CD4-positive, alpha-beta T cell (primary cell): ENCODE measurements at regions of chr18 and their contacts with region 1.

Region 1: GRCh38 chr18:11980555-11981382 is 538 bp upstream of the IMPA2 start:
- DNase-seq: peak; percentile 89 to 98 (median 94)
- ATAC-seq: peak; percentile 94
- H3K4me3 ChIP-seq: peak overlapping the region; percentile 64
- H3K4me3 Mint-ChIP-seq: peak overlapping the region; percentile 93
- H3K27ac ChIP-seq: no peak overlapping the region
- H3K27ac Mint-ChIP-seq: peak overlapping the region; percentile 49
- H3K4me1 ChIP-seq: peaks cover 19% of the 10 kb centered on the region
- H3K4me1 Mint-ChIP-seq: peaks cover 12% of the 10 kb centered on the region
- H3K27me3 ChIP-seq: no peaks in the 10 kb centered on the region
- H3K27me3 Mint-ChIP-seq: no peaks in the 10 kb centered on the region
- CTCF ChIP-seq: no peak

Region 2: DNA sequence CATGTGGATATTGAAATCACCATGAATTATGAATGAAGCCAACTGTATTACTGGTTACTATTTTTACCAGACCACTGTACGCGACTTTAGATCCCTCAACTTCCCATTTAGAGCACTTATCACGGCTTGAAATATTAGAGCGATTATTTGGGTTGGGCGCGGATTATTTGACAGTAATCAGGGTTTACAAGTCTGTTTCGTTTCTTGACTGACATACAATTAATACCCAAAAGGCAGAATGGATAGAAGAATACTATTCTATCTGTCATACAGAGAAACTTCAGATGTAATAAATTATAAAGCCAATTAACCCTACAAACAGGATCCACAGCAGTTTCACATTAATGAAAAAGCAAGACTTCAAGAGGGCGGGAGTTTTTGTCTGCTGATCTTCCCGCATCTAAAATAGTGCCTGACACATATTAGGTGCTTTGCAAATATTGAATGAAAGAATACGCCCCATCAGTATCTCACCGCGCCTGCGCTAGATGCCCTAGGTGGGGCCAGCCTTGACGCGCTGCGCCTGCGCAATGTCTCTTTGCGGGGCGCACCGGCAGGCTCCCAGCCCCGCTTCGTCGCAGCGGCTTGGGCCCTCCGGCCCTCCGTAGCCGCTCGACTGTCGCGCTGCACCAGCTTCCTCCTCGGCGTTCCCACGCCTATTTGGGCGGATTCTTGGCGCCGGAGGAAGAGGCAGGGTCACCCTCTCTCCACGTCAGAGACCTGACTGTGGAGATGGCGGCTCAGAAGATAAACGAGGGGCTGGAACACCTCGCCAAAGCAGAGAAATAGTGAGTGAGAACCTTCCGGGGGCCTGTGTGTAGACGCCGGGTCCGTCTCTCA is 1455.2 kb before region 1 on chr18 and contains the start of gene NAPG:
- CTCF ChIA-PET with region 1: no interaction called
- POLR2A ChIA-PET with region 1: no interaction called
- intact Hi-C with region 1: loop called (anchors 5 kb)
- DNase-seq: peak; percentile 75 to 98 (median 86)
- ATAC-seq: peak; percentile 85
- H3K4me3 ChIP-seq: peak within 1 kb of the TSS; percentile 87
- H3K4me3 Mint-ChIP-seq: peak within 1 kb of the TSS; percentile 99
- H3K27ac ChIP-seq: peak within 1 kb of the TSS; percentile 55 to 86
- H3K27ac Mint-ChIP-seq: peak within 1 kb of the TSS; percentile 96
- H3K4me1 ChIP-seq: peaks cover 42% of the 10 kb centered on the region
- H3K4me1 Mint-ChIP-seq: peaks cover 56% of the 10 kb centered on the region
- H3K27me3 ChIP-seq: peaks cover 0 to 5% of the 10 kb centered on the region in 2 experiments
- H3K27me3 Mint-ChIP-seq: no peaks in the 10 kb centered on the region
- CTCF ChIP-seq: no peak
- total RNA-seq, gene NAPG: 25.9 to 27.3 TPM

Region 3: DNA sequence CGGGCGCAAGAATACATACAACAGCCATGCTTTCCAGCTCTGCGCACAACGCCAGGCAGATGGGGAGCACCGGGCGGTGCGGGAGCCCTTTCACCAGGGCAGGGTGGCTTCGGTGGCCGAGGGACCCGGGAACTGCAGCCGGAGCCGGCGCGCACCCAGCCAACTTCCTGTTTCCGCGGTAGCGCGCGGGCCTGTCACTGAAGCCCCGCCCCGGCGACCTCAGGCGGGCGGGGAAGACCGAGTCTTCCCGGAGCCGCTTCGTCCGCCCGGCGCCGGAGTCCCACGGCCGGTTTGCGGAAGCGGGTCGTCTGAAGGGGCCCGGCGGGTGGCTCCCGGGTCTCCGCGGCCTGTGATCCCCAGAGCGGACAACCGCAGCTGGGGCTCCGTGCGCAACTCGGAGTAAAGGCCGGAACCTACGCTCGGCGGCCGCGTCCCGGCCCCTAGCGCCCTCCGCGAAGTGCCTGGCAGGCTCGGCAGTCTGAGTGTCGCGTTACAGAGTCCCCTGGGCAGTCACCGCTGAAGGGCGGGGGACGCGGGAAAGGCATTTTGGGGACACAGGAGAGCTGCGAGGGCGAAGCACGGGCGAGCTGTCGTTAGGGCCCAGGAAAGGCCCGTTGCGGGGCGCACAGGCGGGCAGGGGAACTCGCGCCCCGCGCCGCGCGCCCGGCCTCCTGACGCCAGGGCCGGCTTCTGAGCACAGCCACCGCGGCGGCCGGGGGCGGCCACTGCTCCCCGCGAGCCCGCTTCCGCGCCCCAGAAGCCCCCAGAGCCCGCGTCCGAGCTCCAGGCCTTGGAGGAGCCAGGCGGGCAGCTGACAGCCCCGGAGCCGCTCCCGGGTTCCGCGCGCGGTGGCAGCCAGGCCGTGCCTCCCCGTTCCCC is 72.3 kb before region 1 on chr18 and contains the start of gene MPPE1:
- CTCF ChIA-PET with region 1: no interaction called
- POLR2A ChIA-PET with region 1: interaction called, 14 read pairs
- intact Hi-C with region 1: loop called in 1 of 2 experiments (anchors 2 kb)
- DNase-seq: peak; percentile 67 to 94 (median 82)
- ATAC-seq: peak; percentile 90
- H3K4me3 ChIP-seq: peak within 1 kb of the TSS; percentile 89
- H3K4me3 Mint-ChIP-seq: peak within 1 kb of the TSS; percentile 97
- H3K27ac ChIP-seq: peak within 1 kb of the TSS; percentile 89 to 94
- H3K27ac Mint-ChIP-seq: peak within 1 kb of the TSS; percentile 98
- H3K4me1 ChIP-seq: peaks cover 24% of the 10 kb centered on the region
- H3K4me1 Mint-ChIP-seq: peaks cover 31% of the 10 kb centered on the region
- H3K27me3 ChIP-seq: no peaks in the 10 kb centered on the region
- H3K27me3 Mint-ChIP-seq: no peaks in the 10 kb centered on the region
- CTCF ChIP-seq: no peak
- total RNA-seq, gene MPPE1: 62.6 to 68.3 TPM

Region 4: DNA sequence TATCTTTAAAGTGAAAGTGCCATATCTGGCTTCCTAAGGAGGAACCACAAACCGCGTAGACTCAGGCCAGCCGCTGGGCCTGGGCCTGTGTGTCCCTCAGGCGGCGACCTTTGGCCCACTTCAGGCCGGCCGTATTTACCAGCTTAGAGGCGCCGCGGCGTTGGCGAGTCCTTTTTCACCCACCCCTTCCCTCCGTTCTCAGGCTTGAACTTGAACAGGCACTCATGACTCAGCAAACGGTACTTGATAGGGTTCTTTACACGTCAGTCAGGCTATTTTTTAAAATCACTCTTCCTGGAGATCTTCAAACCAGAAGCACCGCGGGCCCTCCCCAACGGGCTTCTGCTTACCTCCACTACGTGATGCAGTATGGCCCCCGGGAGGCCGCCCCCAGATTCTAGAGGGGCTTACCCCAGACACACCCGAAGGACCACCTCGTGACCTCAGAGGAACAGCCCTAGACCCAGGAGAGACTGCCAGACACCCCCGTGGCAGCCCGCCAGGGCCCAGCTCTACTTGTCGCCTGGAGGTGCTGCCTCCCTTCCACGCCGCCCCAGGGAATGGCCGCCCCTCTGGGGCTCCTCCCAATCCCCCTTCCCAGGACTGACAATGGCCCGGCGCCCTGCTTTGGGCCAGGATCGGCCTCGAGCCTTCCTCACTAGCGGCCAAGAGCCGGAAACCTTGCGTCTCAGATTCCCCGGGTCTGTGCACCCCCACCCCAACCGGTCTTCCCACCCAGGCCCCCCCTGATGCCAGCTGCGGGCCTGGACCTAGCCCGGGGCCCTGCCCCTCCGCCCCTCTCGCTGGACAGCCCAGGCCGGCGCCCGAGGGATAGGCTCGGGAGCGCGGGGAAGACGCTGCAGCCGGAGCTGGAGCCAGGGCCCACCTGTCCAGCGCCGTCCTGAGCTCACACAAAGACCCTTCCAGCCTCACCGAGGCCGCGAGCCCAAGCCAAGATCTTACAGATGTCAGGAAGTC is 33.3 kb before region 1 on chr18:
- CTCF ChIA-PET with region 1: no interaction called
- POLR2A ChIA-PET with region 1: interaction called, 5 read pairs
- intact Hi-C with region 1: loop called in 1 of 2 experiments (anchors 5 kb)
- DNase-seq: peak; percentile 14 to 78 (median 36)
- ATAC-seq: peak; percentile 87
- H3K4me3 ChIP-seq: peak overlapping the region; percentile 67
- H3K4me3 Mint-ChIP-seq: peak overlapping the region; percentile 85
- H3K27ac ChIP-seq: peak overlapping the region in 1 of 2 donors; percentile 44
- H3K27ac Mint-ChIP-seq: peak overlapping the region; percentile 60
- H3K4me1 ChIP-seq: peaks cover 14% of the 10 kb centered on the region
- H3K4me1 Mint-ChIP-seq: peaks cover 16% of the 10 kb centered on the region
- H3K27me3 ChIP-seq: no peaks in the 10 kb centered on the region
- H3K27me3 Mint-ChIP-seq: no peaks in the 10 kb centered on the region
- CTCF ChIP-seq: no peak